CD4-positive, alpha-beta memory T cell (primary cell): ENCODE measurements at regions of chr1 and their contacts with region 1.

Region 1: GRCh38 chr1:155250633-155251449 is 4.4 kb downstream of the ENTREP3 start:
- DNase-seq: peak; percentile 90 to 94 (median 91)
- H3K4me3 ChIP-seq: peak overlapping the region in 1 of 2 donors; percentile 46
- H3K4me3 Mint-ChIP-seq: peak overlapping the region; percentile 35 to 81 (median 55)
- H3K27ac ChIP-seq: peak overlapping the region; percentile 20
- H3K27ac Mint-ChIP-seq: peak overlapping the region in 4 of 7 donors; percentile 54 to 92 (median 70)
- H3K4me1 ChIP-seq: peaks cover 21% of the 10 kb centered on the region
- H3K4me1 Mint-ChIP-seq: peaks cover 12 to 35% (median 20%) of the 10 kb centered on the region in 4 donors
- H3K27me3 ChIP-seq: no peaks in the 10 kb centered on the region
- H3K27me3 Mint-ChIP-seq: no peaks in the 10 kb centered on the region

Region 2: DNA sequence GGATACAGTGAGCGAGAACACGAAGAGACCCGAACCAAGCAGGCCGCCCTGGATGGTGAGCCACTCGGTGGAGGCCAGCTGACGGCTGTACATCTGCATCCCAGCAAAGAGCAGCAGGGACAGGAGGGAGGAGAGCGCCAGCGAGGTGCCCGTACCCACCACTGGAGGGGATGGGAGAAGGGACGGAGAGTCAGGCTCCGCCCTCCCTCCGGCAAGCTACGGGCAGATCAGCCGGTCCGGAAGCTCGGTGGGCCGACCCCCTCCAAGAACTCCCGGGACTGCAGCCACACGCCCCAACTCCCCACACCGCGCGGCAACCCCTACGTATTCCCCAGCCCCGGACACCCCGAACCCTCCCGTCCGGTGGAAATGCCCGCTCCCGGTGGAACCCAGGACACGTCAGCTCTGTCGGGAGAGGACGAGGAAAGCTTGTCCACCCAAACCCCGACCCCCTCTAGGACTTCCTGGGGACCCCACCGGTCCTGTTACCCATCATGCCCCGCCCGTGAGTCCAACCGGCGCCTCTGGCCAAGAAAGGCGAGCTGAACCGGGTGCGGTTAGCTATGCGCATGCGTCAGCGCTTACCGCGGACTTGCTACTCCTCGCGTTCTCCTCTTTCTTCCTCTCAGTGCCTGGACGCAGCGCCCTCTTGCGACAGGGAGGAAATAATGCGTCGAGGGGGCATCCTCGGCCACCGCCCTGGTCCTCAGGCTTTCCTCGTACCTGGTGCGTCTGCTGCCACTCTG is 77.9 kb before region 1 on chr1 and contains the start of gene KRTCAP2:
- CTCF ChIA-PET with region 1: interaction called, 20 read pairs
- POLR2A ChIA-PET with region 1: no interaction called
- intact Hi-C with region 1: no loop called
- DNase-seq: peak; percentile 92 to 95 (median 93)
- H3K4me3 ChIP-seq: peak within 1 kb of the TSS; percentile 83 to 93
- H3K4me3 Mint-ChIP-seq: peak within 1 kb of the TSS; percentile 96 to 100 (median 99)
- H3K27ac ChIP-seq: peak within 1 kb of the TSS; percentile 87
- H3K27ac Mint-ChIP-seq: peak within 1 kb of the TSS; percentile 97 to 100 (median 99)
- H3K4me1 ChIP-seq: peaks cover 52% of the 10 kb centered on the region
- H3K4me1 Mint-ChIP-seq: peaks cover 31 to 64% (median 47%) of the 10 kb centered on the region in 4 donors
- H3K27me3 ChIP-seq: no peaks in the 10 kb centered on the region
- H3K27me3 Mint-ChIP-seq: no peaks in the 10 kb centered on the region
- total RNA-seq, gene KRTCAP2: 173 to 180 TPM

Region 3: GRCh38 chr1:155184843-155185350 is 65.9 kb before region 1 on chr1:
- CTCF ChIA-PET with region 1: no interaction called
- POLR2A ChIA-PET with region 1: no interaction called
- intact Hi-C with region 1: no loop called
- DNase-seq: peak in 1 of 5 donors; percentile 5
- H3K4me3 ChIP-seq: no peak overlapping the region
- H3K4me3 Mint-ChIP-seq: no peak overlapping the region
- H3K27ac ChIP-seq: no peak overlapping the region
- H3K27ac Mint-ChIP-seq: no peak overlapping the region
- H3K4me1 ChIP-seq: no peaks in the 10 kb centered on the region
- H3K4me1 Mint-ChIP-seq: peaks cover 4 to 13% (median 5%) of the 10 kb centered on the region in 4 donors
- H3K27me3 ChIP-seq: no peaks in the 10 kb centered on the region
- H3K27me3 Mint-ChIP-seq: no peaks in the 10 kb centered on the region

Region 4: DNA sequence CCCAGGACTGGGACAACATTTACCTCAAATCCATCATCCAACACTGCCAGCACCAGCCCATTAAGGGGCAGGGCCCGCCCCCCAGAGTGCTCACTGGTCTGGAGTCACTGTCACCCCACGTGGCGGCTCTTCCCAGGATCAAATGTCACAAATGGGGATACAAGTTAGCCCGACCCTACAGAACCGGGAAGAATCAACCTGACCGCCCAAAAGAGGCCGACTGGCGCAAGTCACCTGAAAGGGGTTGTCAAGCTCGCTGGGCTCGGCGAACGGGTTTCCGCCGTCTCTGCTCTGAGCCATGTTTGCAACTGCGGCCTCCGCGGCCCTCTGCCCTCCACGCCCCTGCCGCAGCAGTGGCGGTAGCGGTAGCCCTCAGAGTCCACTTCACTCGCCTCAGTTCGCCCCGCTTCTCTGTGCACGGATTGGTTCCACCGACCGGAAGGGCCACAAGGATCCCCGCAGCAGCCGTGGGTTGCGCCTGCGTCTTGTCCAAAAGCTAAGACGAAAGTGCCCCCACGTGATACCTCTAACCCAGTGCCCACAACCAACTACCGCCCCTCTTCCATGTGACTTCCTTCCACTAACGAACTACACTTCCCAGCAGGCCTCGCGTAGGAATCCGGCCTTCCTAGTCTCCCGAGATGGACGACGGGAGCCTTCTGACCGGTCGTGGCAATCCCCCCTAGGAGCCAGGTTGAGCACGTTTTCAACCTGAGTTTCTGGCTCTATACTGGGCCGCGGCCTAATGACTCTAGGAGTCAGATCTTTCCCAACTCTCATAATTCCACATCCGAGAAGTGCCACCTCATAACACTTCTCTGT is 11.2 kb after region 1 on chr1 and contains the start of gene SCAMP3:
- CTCF ChIA-PET with region 1: interaction called, 77 read pairs
- POLR2A ChIA-PET with region 1: interaction called, 59 read pairs
- intact Hi-C with region 1: no loop called
- DNase-seq: peak; percentile 82 to 94 (median 84)
- H3K4me3 ChIP-seq: peak within 1 kb of the TSS; percentile 94
- H3K4me3 Mint-ChIP-seq: peak within 1 kb of the TSS; percentile 95 to 100 (median 99)
- H3K27ac ChIP-seq: peak within 1 kb of the TSS; percentile 86
- H3K27ac Mint-ChIP-seq: peak within 1 kb of the TSS; percentile 86 to 99 (median 97)
- H3K4me1 ChIP-seq: peaks cover 23% of the 10 kb centered on the region
- H3K4me1 Mint-ChIP-seq: peaks cover 12 to 40% (median 30%) of the 10 kb centered on the region in 4 donors
- H3K27me3 ChIP-seq: no peaks in the 10 kb centered on the region
- H3K27me3 Mint-ChIP-seq: no peaks in the 10 kb centered on the region
- total RNA-seq, gene SCAMP3: 94.4 to 101 TPM

Region 5: GRCh38 chr1:155308493-155309422 is 57.9 kb after region 1 on chr1 and contains the start of gene FDPS:
- CTCF ChIA-PET with region 1: interaction called, 27 read pairs
- POLR2A ChIA-PET with region 1: interaction called, 8 read pairs
- intact Hi-C with region 1: no loop called
- DNase-seq: peak; percentile 96 to 99 (median 98)
- H3K4me3 ChIP-seq: peak within 1 kb of the TSS; percentile 92 to 97
- H3K4me3 Mint-ChIP-seq: peak within 1 kb of the TSS; percentile 92 to 99 (median 97)
- H3K27ac ChIP-seq: peak within 1 kb of the TSS; percentile 90
- H3K27ac Mint-ChIP-seq: peak within 1 kb of the TSS; percentile 88 to 99 (median 98)
- H3K4me1 ChIP-seq: peaks cover 22% of the 10 kb centered on the region
- H3K4me1 Mint-ChIP-seq: peaks cover 18 to 44% (median 25%) of the 10 kb centered on the region in 4 donors
- H3K27me3 ChIP-seq: no peaks in the 10 kb centered on the region
- H3K27me3 Mint-ChIP-seq: peaks cover 0 to 2% of the 10 kb centered on the region in 2 donors
- total RNA-seq, gene FDPS: 82.8 to 91.3 TPM

Region 6: GRCh38 chr1:155504207-155504606 is 253.4 kb after region 1 on chr1:
- CTCF ChIA-PET with region 1: interaction called, 22 read pairs
- POLR2A ChIA-PET with region 1: no interaction called
- intact Hi-C with region 1: no loop called
- DNase-seq: peak in 3 of 5 donors; percentile 23 to 31 (median 24)
- H3K4me3 ChIP-seq: no peak overlapping the region
- H3K4me3 Mint-ChIP-seq: no peak overlapping the region
- H3K27ac ChIP-seq: no peak overlapping the region
- H3K27ac Mint-ChIP-seq: peak overlapping the region in 1 of 7 donors; percentile 5
- H3K4me1 ChIP-seq: peaks cover 46% of the 10 kb centered on the region
- H3K4me1 Mint-ChIP-seq: peaks cover 27 to 46% (median 35%) of the 10 kb centered on the region in 4 donors
- H3K27me3 ChIP-seq: no peaks in the 10 kb centered on the region
- H3K27me3 Mint-ChIP-seq: no peaks in the 10 kb centered on the region

Region 7: DNA sequence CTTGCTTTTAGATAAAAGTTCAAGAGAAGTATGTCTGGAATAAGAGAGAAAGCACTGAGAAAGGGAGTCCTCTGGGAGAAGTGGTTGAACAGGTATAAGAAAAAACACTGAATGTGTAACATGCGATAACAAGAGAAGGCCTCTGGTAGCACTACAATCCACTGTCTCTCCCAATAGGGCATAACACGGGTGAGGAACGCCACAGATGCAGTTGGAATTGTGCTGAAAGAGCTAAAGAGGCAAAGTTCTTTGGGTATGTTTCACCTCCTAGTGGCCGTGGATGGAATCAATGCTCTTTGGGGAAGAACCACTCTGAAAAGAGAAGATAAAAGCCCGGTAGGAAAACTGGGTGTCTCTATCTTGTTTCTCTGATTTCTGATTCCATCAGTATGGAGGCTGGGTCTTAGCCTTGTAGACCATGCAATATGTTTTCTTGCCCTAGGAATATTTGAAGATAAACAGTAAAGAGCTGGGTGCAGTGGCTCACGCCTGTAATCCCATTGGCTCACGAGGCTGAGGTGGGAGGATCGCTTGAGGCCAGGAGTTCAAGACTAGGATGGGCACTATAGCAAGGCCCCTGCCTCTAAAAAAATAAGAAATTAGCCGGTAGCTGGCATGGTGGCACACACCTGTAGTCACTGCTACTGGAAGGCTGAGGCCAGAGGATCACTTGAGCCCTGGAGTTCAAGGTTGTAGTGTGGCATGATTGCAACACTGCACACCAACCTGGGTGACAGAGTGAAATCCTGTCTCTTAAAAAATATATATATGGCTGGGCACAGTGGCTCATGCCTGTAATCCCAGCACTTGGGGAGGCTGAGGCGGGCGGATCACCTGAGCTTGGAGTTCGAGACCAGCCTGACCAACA is 478.4 kb after region 1 on chr1:
- CTCF ChIA-PET with region 1: no interaction called
- POLR2A ChIA-PET with region 1: no interaction called
- intact Hi-C with region 1: loop called (anchors 2 kb)
- DNase-seq: peak; percentile 18 to 48 (median 23)
- H3K4me3 ChIP-seq: no peak overlapping the region
- H3K4me3 Mint-ChIP-seq: no peak overlapping the region
- H3K27ac ChIP-seq: no peak overlapping the region
- H3K27ac Mint-ChIP-seq: peak overlapping the region in 4 of 7 donors; percentile 47 to 88 (median 50)
- H3K4me1 ChIP-seq: no peaks in the 10 kb centered on the region
- H3K4me1 Mint-ChIP-seq: peaks cover 0 to 1% (median 0%) of the 10 kb centered on the region in 4 donors
- H3K27me3 ChIP-seq: no peaks in the 10 kb centered on the region
- H3K27me3 Mint-ChIP-seq: no peaks in the 10 kb centered on the region